Naive thymus-derived CD8-positive, alpha-beta T cell (primary cell): ENCODE measurements at regions of chr2 and their contacts with region 1.

Region 1: GRCh38 chr2:240624950-240625621 is at the start of gene GPR35:
- DNase-seq: peak; percentile 50 to 89 (median 72)
- ATAC-seq: peak; percentile 48 to 71
- H3K4me3 Mint-ChIP-seq: peak within 1 kb of the TSS in 9 of 10 donors; percentile 47 to 84 (median 73)
- H3K27ac Mint-ChIP-seq: peak within 1 kb of the TSS; percentile 74 to 99 (median 92)
- H3K4me1 Mint-ChIP-seq: peaks cover 30 to 59% (median 57%) of the 10 kb centered on the region in 4 donors
- H3K27me3 Mint-ChIP-seq: no peaks in the 10 kb centered on the region
- polyA plus RNA-seq, gene GPR35: 1.3 to 1.7 (median 1.6) TPM

Region 2: DNA sequence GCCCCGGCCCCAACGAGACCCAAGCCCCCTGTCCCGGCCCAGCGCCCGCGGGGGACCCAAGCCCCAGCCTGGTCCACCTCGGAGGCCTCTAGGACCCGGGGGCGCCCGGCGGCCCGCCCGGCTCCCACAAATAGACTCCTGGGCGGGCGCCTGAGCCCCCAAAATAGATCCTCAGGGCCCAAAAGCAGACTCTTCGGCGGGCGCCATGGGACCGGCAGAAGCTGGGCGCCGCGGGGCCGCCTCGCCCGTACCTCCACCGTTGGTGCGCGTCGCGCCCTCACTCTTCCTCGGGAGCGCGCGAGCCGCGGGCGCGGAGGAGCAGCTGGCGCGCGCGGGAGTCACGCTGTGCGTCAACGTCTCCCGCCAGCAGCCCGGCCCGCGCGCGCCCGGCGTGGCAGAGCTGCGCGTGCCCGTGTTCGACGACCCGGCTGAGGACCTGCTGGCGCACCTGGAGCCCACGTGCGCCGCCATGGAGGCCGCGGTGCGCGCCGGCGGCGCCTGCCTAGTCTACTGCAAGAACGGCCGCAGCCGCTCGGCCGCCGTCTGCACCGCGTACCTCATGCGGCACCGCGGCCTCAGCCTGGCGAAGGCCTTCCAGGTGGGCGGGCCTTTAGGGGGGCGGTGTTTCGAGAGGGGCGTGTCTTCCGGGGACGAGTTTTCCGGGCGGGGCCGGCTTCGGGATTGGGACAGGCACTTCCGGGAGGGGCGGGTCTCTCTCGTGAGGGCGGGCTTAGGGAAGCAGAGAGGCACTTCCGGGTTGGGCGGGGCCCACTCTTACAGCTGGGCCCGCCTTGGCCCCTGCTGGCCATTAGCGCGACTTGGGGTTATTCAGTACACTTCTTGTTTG is 64.4 kb before region 1 on chr2:
- POLR2A ChIA-PET with region 1: interaction called, 62 read pairs
- DNase-seq: peak; percentile 98 to 100 (median 99)
- ATAC-seq: peak; percentile 50 to 58
- H3K4me3 Mint-ChIP-seq: peak overlapping the region; percentile 80 to 94 (median 85)
- H3K27ac Mint-ChIP-seq: peak overlapping the region; percentile 81 to 97 (median 94)
- H3K4me1 Mint-ChIP-seq: peaks cover 42 to 81% (median 73%) of the 10 kb centered on the region in 4 donors
- H3K27me3 Mint-ChIP-seq: no peaks in the 10 kb centered on the region

Region 3: DNA sequence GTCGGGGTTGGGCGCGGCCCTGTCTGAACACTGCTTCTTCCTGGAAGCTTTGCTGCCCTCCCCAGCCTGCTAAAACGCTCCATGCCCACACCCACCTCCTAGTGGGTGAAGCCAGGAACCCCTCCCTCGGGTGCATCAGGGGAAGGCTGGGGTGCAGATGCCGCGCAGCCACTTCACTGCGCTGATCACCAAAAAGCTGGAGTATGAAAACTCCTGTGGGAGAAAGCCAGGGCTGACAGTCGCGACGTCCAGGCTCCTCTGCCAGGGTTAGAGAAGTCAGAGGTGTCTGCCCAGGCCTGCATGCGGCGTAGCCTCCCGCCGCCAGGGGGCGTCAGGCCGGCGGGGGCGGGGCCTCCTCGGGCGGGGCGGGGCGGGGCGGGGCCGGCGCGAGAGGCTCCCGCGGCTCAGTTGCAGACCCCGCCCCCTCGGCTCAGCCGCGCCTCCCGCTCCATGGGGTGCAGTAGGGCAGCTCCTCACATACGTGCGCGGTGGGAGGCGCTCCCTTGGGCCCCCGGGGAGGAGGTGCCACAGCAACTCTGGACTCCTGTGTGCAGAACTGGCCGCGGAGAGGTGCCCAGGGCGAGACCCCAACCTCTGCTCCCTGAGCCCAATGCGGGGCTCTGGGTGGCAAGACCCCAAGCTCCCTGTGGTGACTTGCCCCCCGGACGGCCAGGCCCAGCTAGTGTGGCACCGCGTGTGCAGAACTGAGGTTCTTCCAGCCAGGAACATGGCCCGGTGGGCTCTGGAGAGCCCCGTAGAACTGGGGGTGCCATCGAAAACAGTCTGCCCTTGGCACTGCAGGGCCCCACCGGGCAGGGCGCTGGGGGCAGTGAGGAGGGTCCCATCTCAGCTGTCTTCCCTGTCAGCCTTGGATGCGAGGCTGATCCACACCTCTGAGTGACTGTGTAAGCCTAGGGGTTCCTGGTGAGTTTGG is 58.6 kb before region 1 on chr2:
- POLR2A ChIA-PET with region 1: interaction called, 62 read pairs
- DNase-seq: peak; percentile 91 to 98 (median 92)
- ATAC-seq: peak; percentile 55 to 61
- H3K4me3 Mint-ChIP-seq: peak overlapping the region; percentile 86 to 95 (median 94)
- H3K27ac Mint-ChIP-seq: peak overlapping the region; percentile 84 to 99 (median 97)
- H3K4me1 Mint-ChIP-seq: peaks cover 48 to 80% (median 76%) of the 10 kb centered on the region in 4 donors
- H3K27me3 Mint-ChIP-seq: no peaks in the 10 kb centered on the region

Region 4: DNA sequence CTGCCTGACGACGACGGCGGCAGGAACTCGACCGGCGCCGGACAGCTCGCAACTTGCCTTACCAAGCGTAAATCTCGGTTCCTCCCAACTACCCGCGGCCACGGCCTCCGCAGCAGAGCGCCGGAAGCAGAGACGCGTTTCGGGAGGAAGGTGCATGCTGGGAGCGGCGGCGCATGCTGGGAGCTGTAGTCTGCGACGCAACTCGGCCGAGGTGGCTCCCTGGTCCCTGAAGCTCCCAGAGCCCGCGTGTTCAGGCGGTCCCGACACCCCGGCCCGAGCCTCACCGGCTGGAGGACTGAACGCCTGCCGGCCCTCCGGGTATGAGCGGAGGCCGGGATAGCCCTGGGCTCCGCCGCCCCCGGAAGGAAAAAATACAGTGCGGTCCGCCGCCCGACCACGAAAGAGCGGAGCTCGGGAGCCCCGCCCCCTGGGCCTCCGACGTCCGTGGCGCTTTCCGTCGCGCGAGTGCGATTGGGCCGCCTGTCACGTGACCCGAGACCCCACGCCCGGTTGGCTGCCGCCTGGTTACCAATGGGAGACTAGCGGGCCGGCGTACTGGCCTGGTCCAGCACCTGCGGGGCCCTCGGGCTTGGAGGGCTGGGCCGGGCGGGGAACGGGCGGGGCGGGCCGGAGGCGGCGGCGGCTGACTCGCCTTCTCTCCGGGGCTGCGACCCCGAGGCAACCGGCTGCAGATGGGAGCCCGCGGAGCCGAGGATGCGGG is 38.7 kb before region 1 on chr2 and contains the start of gene CAPN10:
- POLR2A ChIA-PET with region 1: interaction called, 62 read pairs
- DNase-seq: peak; percentile 91 to 99 (median 96)
- ATAC-seq: peak; percentile 86 to 88
- H3K4me3 Mint-ChIP-seq: peak within 1 kb of the TSS; percentile 91 to 97 (median 96)
- H3K27ac Mint-ChIP-seq: peak within 1 kb of the TSS; percentile 88 to 97 (median 95)
- H3K4me1 Mint-ChIP-seq: peaks cover 30 to 76% (median 56%) of the 10 kb centered on the region in 4 donors
- H3K27me3 Mint-ChIP-seq: no peaks in the 10 kb centered on the region
- polyA plus RNA-seq, gene CAPN10: 6.7 to 21.4 (median 9.8) TPM

Region 5: DNA sequence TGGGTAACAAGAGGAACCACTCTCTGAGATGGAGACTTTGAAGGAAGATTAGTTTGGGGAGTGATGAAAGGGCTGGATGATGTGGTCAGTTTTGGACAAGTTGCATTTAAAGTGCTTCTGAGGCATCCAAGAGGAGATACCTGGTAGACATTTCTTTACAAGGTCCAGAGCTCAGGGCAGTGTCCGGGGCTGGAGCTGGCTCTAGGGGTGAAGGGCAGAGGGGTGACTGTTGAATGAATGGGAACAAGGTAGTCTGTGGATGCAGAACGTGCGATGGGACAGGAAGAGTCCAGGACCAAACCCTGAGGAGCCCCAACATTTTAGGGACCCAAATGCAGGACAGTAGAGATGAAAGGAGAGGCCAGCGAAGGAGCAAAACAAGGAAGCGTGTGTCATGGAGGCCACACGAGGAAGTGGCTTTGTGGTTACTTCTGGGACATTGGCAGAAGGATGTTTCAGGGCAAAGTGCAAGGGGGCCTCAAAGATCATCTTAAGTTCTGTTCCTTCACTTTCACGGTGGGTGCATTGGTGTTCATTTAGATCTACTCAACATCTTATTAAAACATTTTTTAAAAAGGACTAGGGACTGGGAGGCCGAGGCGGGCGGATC is 13.4 kb before region 1 on chr2:
- POLR2A ChIA-PET with region 1: interaction called, 10 read pairs
- DNase-seq: no peak
- ATAC-seq: no peak
- H3K4me3 Mint-ChIP-seq: peak overlapping the region in 7 of 10 donors; percentile 7 to 64 (median 52)
- H3K27ac Mint-ChIP-seq: peak overlapping the region in 9 of 10 donors; percentile 26 to 88 (median 71)
- H3K4me1 Mint-ChIP-seq: peaks cover 0 to 12% (median 5%) of the 10 kb centered on the region in 4 donors
- H3K27me3 Mint-ChIP-seq: no peaks in the 10 kb centered on the region